Vagina (tissue), 2 donors: ENCODE measurements at regions of chr1 and their contacts with region 1.

Region 1: GRCh38 chr1:12594966-12595756 is 22.8 kb downstream of the DHRS3 start:
- DNase-seq: no peak
- H3K4me3 ChIP-seq: peak overlapping the region; percentile 37 to 44
- H3K27ac ChIP-seq: peak overlapping the region; percentile 80
- H3K4me1 ChIP-seq: peaks cover 99% of the 10 kb centered on the region
- H3K27me3 ChIP-seq: no peaks in the 10 kb centered on the region
- CTCF ChIP-seq: no peak
- POLR2A ChIP-seq: no peak

Region 2: DNA sequence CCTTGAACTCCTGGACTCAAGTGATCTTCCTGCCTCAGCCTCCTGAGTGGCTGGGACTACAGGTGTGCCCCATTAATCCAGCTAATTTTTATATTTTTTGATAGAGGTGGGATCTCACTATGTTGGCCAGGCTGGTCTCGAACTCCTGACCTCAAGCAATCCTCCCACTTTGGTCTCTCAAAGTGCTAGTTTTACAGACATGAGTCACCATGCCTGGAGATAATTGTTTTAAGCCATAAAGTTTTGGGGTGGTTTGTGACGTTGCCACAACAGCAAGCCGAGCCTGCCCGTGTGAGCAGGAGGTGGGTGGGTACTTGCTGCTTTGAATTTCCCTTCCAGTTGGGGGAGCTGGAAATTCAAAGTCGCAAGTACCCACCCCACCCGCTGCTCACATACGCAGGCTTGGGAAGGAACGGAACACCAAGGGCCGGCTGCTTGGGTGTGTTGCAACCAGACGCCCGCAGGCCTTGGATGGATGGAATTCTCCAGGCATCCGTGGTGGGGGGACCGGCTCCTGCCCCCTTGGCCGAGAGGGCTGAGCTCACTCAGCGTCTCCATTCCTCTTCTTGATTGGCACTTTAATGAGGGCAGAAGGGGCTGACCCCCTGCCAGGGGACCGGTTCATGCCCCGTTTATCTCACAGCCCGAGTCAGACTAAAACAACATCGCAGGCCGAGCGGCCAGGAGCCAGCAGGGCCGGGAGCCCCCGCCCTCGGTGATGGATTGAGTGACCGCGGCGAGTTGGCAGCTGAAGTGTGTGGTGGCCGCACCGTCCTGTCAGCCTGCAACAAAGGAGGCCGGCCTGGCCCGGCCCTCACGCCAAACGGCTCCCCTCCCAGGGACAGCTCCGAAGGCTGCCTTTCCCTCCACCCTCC is 55.2 kb before region 1 on chr1:
- intact Hi-C with region 1: loop called (anchors 5 kb)
- DNase-seq: no peak
- H3K4me3 ChIP-seq: peak overlapping the region in 1 of 2 donors; percentile 28
- H3K27ac ChIP-seq: peak overlapping the region; percentile 76
- H3K4me1 ChIP-seq: peaks cover 25% of the 10 kb centered on the region
- H3K27me3 ChIP-seq: no peaks in the 10 kb centered on the region
- CTCF ChIP-seq: no peak
- POLR2A ChIP-seq: no peak

Region 3: GRCh38 chr1:12556368-12556930 is 38.7 kb before region 1 on chr1:
- intact Hi-C with region 1: loop called (anchors 5 kb)
- DNase-seq: no peak
- H3K4me3 ChIP-seq: no peak overlapping the region
- H3K27ac ChIP-seq: peak overlapping the region; percentile 87
- H3K4me1 ChIP-seq: peaks cover 31% of the 10 kb centered on the region
- H3K27me3 ChIP-seq: no peaks in the 10 kb centered on the region
- CTCF ChIP-seq: no peak
- POLR2A ChIP-seq: no peak

Region 4: GRCh38 chr1:12658531-12659453 is 63.6 kb after region 1 on chr1:
- intact Hi-C with region 1: no loop called
- DNase-seq: no peak
- H3K4me3 ChIP-seq: no peak overlapping the region
- H3K27ac ChIP-seq: no peak overlapping the region
- H3K4me1 ChIP-seq: no peaks in the 10 kb centered on the region
- H3K27me3 ChIP-seq: no peaks in the 10 kb centered on the region
- CTCF ChIP-seq: peak; percentile 88 to 96 (median 91)
- POLR2A ChIP-seq: no peak

Region 5: GRCh38 chr1:12769976-12770505 is 174.9 kb after region 1 on chr1:
- intact Hi-C with region 1: no loop called
- DNase-seq: peak in 1 of 2 donors; percentile 70
- H3K4me3 ChIP-seq: no peak overlapping the region
- H3K27ac ChIP-seq: no peak overlapping the region
- H3K4me1 ChIP-seq: no peaks in the 10 kb centered on the region
- H3K27me3 ChIP-seq: no peaks in the 10 kb centered on the region
- CTCF ChIP-seq: no peak
- POLR2A ChIP-seq: no peak

Region 6: DNA sequence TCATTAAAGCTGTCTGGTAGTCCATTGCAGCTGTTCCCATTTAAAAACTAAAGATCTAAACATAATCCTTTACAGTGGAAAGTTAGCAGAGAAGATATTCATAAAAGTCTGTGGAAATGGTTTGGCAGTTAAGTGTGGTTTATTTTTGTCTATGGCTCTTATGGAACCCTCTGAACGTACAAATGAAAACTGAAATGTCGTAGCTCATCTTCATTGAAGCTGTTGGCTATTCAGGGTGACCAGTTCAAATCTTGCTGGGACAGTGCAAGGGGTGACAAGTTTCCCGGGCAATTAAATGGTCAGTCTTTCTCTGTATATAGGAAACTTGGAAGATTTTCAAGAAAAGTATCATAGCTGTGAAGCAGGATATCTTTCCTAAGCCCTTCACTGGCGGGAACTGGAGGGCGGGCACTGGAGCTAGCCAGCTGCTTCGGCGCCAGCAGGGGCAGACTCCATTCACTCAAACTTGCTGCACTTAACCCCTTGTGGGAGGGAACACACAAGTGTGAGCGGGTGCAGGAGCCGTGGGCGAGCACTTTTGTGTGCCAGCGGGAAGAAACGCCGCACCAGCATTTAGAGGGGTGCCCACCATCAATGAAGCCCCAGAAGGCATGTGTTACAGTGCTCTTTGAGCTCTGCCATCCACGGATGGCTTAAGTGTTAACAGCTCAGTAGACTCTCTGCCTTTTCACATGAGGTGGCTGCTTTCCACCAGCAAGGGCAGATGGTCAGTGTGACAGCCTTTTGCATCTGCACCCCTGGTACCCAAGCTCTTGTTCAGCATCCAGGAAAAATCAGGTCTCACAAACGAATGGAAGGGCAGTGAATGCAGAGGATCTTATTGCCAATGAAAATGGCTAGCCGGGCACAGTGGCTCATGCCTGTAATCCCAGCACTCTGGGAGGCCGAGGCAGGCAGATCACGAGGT is 1771.2 kb after region 1 on chr1:
- intact Hi-C with region 1: no loop called
- DNase-seq: no peak
- H3K4me3 ChIP-seq: no peak overlapping the region
- H3K27ac ChIP-seq: peak overlapping the region; percentile 35
- H3K4me1 ChIP-seq: peaks cover 30% of the 10 kb centered on the region
- H3K27me3 ChIP-seq: no peaks in the 10 kb centered on the region
- CTCF ChIP-seq: no peak
- POLR2A ChIP-seq: no peak